Pancreas (tissue), 10 donors: ENCODE measurements at regions of chr1 and their contacts with region 1.

Region 1: GRCh38 chr1:31564134-31564989 is 12.0 kb upstream of the TINAGL1 start:
- DNase-seq: peak in 2 of 6 donors; percentile 55 to 65
- ATAC-seq: peak; percentile 49 to 86 (median 84)
- H3K4me3 ChIP-seq: no peak overlapping the region
- H3K27ac ChIP-seq: no peak overlapping the region
- H3K4me1 ChIP-seq: peaks cover 10 to 11% (median 11%) of the 10 kb centered on the region in 3 donors
- H3K27me3 ChIP-seq: no peaks in the 10 kb centered on the region
- CTCF ChIP-seq: peak; percentile 60 to 79 (median 70)

Region 2: GRCh38 chr1:31593770-31594632 is 29.6 kb after region 1 on chr1:
- intact Hi-C with region 1: loop called in 1 of 3 experiments (anchors 2 kb)
- DNase-seq: peak; percentile 84 to 96 (median 92)
- ATAC-seq: peak; percentile 95 to 100 (median 98)
- H3K4me3 ChIP-seq: no peak overlapping the region
- H3K27ac ChIP-seq: no peak overlapping the region
- H3K4me1 ChIP-seq: no peaks in the 10 kb centered on the region
- H3K27me3 ChIP-seq: no peaks in the 10 kb centered on the region
- CTCF ChIP-seq: peak; percentile 82 to 89 (median 87)

Region 3: DNA sequence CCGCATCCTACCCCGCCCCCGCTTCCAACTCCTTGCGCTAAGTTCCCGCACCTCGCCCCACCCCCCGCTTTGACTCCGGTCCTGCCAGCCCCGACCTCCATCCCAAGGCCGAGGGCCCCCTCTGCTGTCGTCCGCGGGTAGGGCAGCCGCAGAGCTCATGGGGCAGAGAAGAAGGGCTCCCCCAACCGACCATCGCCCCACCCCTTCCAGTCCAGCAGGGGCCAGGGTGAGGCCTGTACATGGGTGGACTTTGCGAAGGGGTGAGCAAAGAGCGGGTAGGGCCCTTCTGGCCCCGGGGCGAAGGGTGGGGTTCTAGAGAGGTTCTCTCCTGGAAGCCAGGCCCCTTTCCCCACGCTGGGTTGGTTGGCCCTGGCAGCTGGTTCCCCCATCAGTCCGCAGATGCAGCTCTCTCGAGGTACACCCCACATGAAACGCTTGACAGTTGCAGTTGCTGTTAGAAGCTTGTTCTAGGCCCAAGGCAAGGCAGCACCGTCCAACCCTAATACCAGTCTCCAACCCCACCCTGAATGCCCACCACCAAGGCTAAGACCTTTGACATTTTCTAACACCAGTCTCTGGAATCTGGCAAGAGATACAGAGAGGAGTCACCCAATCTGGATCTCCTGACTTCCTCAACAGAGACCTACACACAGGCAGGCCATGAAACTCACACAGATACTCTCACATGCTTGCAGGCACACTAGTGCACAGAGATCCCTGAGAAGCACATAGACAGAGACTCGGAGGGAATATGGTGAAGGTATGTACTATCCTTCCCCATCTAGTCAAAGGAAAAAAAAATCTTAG is 225.1 kb after region 1 on chr1:
- intact Hi-C with region 1: loop called in 1 of 3 experiments (anchors 10 kb)
- DNase-seq: peak; percentile 89 to 99 (median 95)
- ATAC-seq: peak; percentile 88 to 96 (median 94)
- H3K4me3 ChIP-seq: peak overlapping the region; percentile 32 to 60 (median 42)
- H3K27ac ChIP-seq: no peak overlapping the region
- H3K4me1 ChIP-seq: no peaks in the 10 kb centered on the region
- H3K27me3 ChIP-seq: no peaks in the 10 kb centered on the region
- CTCF ChIP-seq: peak; percentile 51 to 73 (median 70)